OCI-LY7 (cell line): ENCODE measurements at regions of chr7 and their contacts with region 1.

Region 1: DNA sequence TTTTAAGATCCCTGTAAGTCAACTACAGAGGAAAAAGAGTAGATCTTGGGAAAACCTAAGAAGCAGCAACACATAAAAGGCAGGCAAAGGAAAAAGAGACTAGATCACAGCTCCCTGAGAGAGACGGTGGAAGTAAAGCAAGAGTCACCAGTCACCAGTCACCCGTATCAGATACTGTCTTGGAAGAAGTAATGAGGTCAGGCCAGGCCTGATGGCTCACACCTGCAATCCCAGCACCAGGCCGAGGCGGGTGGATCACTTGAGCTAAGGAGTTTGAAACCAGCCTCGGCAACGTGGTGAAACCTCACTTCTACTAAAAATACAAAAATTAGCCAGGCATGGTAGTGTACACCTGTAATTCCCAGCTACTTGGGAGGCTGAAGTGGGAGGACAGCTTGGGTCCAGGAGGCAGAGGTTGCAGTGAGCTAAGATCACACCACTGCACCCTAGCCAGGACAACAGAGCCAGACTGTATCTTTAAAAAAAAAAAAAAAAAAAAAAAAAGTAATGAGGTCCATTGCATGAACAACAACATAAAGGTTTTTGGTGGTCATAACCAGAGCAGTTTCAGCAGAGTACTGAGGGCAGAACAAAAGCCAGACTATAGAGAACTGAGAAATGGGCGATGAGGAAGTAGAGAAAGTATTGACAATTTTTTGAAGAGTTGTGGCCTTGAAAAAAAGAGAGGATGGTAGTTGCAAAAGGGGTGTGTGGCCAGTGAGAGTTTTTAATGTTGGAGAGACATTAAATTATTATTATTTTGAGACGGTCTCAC is 16.9 kb downstream of the ZNF713 start:
- DNase-seq: peak; percentile 59
- H3K4me3 ChIP-seq: no peak overlapping the region
- H3K27ac ChIP-seq: peak overlapping the region; percentile 76
- H3K4me1 ChIP-seq: peaks cover 46% of the 10 kb centered on the region
- CTCF ChIP-seq: no peak

Region 2: GRCh38 chr7:55887821-55888247 is 16.3 kb before region 1 on chr7:
- CTCF ChIA-PET with region 1: no interaction called
- POLR2A ChIA-PET with region 1: interaction called, 10 read pairs
- intact Hi-C with region 1: no loop called
- DNase-seq: peak; percentile 14
- H3K4me3 ChIP-seq: peak overlapping the region; percentile 68
- H3K27ac ChIP-seq: peak overlapping the region; percentile 23
- H3K4me1 ChIP-seq: peaks cover 3% of the 10 kb centered on the region
- CTCF ChIP-seq: no peak

Region 3: GRCh38 chr7:55964261-55965099 is 60.3 kb after region 1 on chr7 and contains the start of gene NIPSNAP2:
- CTCF ChIA-PET with region 1: no interaction called
- POLR2A ChIA-PET with region 1: no interaction called
- intact Hi-C with region 1: loop called (anchors 5 kb)
- DNase-seq: peak; percentile 78
- H3K4me3 ChIP-seq: peak within 1 kb of the TSS; percentile 90
- H3K27ac ChIP-seq: peak within 1 kb of the TSS; percentile 28
- H3K4me1 ChIP-seq: peaks cover 13% of the 10 kb centered on the region
- CTCF ChIP-seq: peak; percentile 54
- total RNA-seq, gene NIPSNAP2: 28.9 and 35.9 TPM in 2 replicates

Region 4: DNA sequence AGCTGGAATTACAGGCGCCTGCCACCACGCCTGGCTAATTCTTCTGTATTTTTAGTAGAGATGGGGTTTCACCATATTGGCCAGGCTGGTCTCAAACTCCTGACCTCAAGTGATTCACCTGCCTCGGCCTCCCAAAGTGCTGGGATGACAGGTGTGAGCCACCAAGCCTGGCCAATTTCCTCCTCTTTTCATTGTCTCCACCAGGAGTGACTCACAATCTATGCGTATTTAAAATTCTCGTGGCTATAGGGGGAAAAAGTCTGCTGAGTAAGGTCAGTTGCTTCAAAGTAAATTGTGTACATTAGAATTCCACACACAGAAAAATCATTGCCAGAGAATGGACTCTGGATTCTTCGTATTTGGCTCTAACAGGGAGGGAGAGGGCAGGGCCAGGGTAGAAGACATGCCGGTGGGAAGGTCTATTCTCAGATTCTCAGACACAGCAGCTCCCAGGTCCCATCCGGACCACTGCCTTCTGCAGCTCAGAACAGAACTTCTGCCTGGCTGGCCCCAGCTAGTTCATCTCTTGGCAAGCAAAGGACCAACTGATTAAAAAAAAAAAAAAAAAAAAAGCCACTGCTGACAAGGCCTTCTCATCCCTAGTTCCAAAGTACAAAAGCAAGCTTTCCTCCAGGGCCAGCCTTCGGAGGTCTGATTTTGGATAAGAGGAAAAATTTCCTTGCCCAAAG is 124.9 kb after region 1 on chr7:
- CTCF ChIA-PET with region 1: no interaction called
- POLR2A ChIA-PET with region 1: no interaction called
- intact Hi-C with region 1: no loop called
- DNase-seq: no peak
- H3K4me3 ChIP-seq: no peak overlapping the region
- H3K27ac ChIP-seq: no peak overlapping the region
- H3K4me1 ChIP-seq: peaks cover 10% of the 10 kb centered on the region
- CTCF ChIP-seq: no peak